K562 (cell line): ENCODE measurements at regions of chr5 and their contacts with region 1.

Region 1: DNA sequence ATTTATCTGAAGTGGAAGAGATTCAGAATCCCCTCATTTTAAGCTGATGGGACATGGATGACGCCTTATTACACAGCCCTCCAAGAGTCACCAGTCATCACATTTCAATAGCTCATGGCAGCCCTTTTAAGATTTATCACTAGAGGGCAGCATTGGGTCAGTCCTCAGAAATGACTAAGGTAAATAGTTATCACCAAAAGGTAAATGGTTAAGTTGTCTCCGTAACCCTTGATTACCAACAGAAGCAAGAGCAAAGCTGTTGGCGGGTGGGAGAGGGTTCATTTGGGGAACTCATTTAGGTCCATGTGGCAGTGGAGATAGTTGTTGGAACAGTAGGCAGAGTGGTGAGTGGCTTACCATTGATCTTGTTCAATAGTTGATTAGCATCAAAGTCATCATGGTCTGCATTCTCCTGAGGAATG is 12.0 kb upstream of the C9 start:
- DNase-seq: peak; percentile 68 to 77 (median 69)
- ATAC-seq: peak; percentile 95
- H3K4me3 ChIP-seq: no peak overlapping the region
- H3K27ac ChIP-seq: no peak overlapping the region
- H3K4me1 ChIP-seq: no peaks in the 10 kb centered on the region
- H3K27me3 ChIP-seq: no peaks in the 10 kb centered on the region
- CTCF ChIP-seq: peak; percentile 80 to 96 (median 84)
- EP300 ChIP-seq: no peak
- POLR2A ChIP-seq: no peak
- RAD21 ChIP-seq: peak; percentile 97

Region 2: DNA sequence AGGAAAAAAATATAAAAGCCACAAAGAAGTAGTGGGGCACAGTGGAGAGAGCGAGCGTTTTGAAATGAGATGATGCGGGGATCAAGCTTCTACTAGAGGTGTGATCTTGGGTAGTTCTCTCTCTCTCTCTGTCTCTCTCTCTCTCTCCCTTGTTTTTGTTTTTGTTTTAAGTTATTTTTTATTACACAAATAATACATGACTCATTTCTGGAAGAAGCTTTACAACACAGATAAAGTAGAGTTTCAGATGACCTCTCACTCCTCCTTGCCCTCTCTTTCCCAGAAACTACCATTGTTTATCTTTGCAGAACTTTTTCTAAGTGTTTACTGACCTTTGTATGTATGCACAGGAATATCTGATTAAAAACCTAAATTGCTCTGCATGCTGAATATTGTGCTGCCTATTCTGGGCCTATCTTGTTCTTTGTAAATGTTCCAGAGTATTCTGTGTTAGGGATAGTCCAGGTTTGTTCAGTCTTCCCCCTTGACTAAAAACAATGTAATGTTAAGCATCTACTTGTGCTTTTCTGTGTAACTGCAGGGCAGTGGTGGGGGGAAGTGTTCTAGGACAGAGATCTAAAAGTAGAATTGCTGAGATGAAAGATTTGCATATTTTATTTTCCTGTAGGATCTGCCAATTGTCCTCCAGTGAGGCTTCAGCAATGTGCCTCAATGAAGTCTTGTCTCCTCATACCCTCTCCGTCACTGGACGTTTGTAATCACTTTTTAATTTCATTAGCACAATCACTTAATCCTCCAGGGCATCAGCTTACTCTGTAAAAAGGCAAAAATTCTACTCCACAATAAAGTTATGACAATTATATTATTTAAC is 208.9 kb before region 1 on chr5:
- CTCF ChIA-PET with region 1: no interaction called
- POLR2A ChIA-PET with region 1: no interaction called
- in situ Hi-C with region 1: no loop called
- intact Hi-C with region 1: no loop called
- DNase-seq: peak in 3 of 4 experiments; percentile 42 to 66 (median 48)
- ATAC-seq: peak; percentile 62
- H3K4me3 ChIP-seq: no peak overlapping the region
- H3K27ac ChIP-seq: peak overlapping the region; percentile 63; the same call in 2 of the 3 replicates
- H3K4me1 ChIP-seq: peaks cover 0 to 34% of the 10 kb centered on the region in 2 experiments; a peak in 4 of 5 replicates
- H3K27me3 ChIP-seq: no peaks in the 10 kb centered on the region
- CTCF ChIP-seq: no peak
- EP300 ChIP-seq: peak; percentile 90; the same call in 1 of the 2 replicates
- POLR2A ChIP-seq: no peak
- RAD21 ChIP-seq: no peak; a peak in 2 of 4 replicates

Region 3: GRCh38 chr5:39461026-39461682 is 84.8 kb after region 1 on chr5:
- CTCF ChIA-PET with region 1: no interaction called
- POLR2A ChIA-PET with region 1: no interaction called
- in situ Hi-C with region 1: no loop called
- intact Hi-C with region 1: loop called (anchors 10 kb)
- DNase-seq: no peak
- ATAC-seq: no peak
- H3K4me3 ChIP-seq: no peak overlapping the region
- H3K27ac ChIP-seq: no peak overlapping the region
- H3K4me1 ChIP-seq: no peaks in the 10 kb centered on the region
- H3K27me3 ChIP-seq: peaks cover 0 to 9% of the 10 kb centered on the region in 2 experiments; a peak in 2 of 5 replicates
- CTCF ChIP-seq: no peak
- EP300 ChIP-seq: no peak
- POLR2A ChIP-seq: no peak
- RAD21 ChIP-seq: no peak

Region 4: GRCh38 chr5:39547553-39548154 is 171.3 kb after region 1 on chr5:
- CTCF ChIA-PET with region 1: interaction called, 27 read pairs
- POLR2A ChIA-PET with region 1: interaction called, 4 read pairs
- in situ Hi-C with region 1: no loop called
- intact Hi-C with region 1: loop called (anchors 1 kb)
- DNase-seq: peak; percentile 32 to 63 (median 46)
- ATAC-seq: peak; percentile 83
- H3K4me3 ChIP-seq: no peak overlapping the region
- H3K27ac ChIP-seq: no peak overlapping the region
- H3K4me1 ChIP-seq: peaks cover 0 to 8% of the 10 kb centered on the region in 2 experiments; a peak in 2 of 5 replicates
- H3K27me3 ChIP-seq: peaks cover 3 to 4% of the 10 kb centered on the region in 2 experiments; a peak in 2 of 5 replicates
- CTCF ChIP-seq: peak; percentile 61 to 90 (median 77); a peak in 5 of 6 replicates
- EP300 ChIP-seq: no peak
- POLR2A ChIP-seq: no peak
- RAD21 ChIP-seq: peak; percentile 97

Region 5: GRCh38 chr5:39570403-39571027 is 194.2 kb after region 1 on chr5:
- CTCF ChIA-PET with region 1: interaction called, 12 read pairs
- POLR2A ChIA-PET with region 1: no interaction called
- in situ Hi-C with region 1: no loop called
- intact Hi-C with region 1: loop called (anchors 2 kb)
- DNase-seq: peak; percentile 20 to 43 (median 24)
- ATAC-seq: 0 out of 3 replicates have a peak, but pooled peaks have one; percentile 45
- H3K4me3 ChIP-seq: no peak overlapping the region
- H3K27ac ChIP-seq: no peak overlapping the region
- H3K4me1 ChIP-seq: no peaks in the 10 kb centered on the region
- H3K27me3 ChIP-seq: no peaks in the 10 kb centered on the region
- CTCF ChIP-seq: peak; percentile 39 to 70 (median 55); a peak in 4 of 6 replicates
- EP300 ChIP-seq: no peak
- POLR2A ChIP-seq: no peak
- RAD21 ChIP-seq: peak; percentile 76 to 81